Dendritic cell treated with granulocyte-macrophage colony-stimulating factor and Interleukin-4, amounts not matched to agents 40 ng/mL and 50 ng/mL, for 4 days (primary cell): ENCODE measurements at regions of chr12 and their contacts with region 1.

Region 1: DNA sequence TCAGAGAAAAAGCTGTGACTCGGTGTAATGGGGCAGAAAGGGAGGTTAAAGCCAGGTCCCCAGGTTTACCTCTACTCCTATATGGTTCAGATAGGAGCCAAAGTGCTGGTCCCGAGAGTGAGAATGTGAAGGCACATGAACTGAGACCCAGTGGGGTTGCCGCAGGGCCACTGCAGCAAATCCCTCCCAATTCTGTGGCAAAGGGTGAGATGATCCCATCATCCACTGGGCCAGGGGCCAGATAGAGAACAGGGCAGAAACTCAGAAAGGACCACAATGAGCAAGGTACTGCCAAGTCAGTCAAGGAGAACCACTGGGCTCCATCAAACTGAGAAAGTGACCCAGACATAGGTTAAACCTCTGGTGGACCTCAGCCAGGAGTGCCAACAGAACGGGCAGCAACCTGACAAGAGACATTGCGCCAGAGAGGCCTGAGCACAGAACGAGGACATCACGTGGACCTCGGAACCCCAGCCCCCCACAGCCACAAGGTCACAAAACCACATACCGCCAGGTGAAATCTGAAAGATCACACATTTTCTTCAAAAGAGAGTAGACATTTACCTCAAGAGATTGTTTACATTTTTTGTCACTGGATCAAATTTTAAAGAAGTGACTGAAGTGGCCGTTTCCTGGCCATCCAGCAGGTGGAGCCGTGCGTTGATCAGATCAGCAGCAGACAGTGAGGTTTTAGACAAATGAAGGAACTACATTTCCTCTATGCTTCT is 20.5 kb upstream of the ITPR2 start:
- H3K4me3 Mint-ChIP-seq: no peak overlapping the region
- H3K27ac Mint-ChIP-seq: peak overlapping the region; percentile 41
- H3K4me1 Mint-ChIP-seq: no peaks in the 10 kb centered on the region
- H3K27me3 Mint-ChIP-seq: no peaks in the 10 kb centered on the region

Region 2: GRCh38 chr12:26810330-26810729 is 43.1 kb before region 1 on chr12:
- intact Hi-C with region 1: no loop called
- H3K4me3 Mint-ChIP-seq: no peak overlapping the region
- H3K27ac Mint-ChIP-seq: peak overlapping the region; percentile 50
- H3K4me1 Mint-ChIP-seq: peaks cover 36% of the 10 kb centered on the region
- H3K27me3 Mint-ChIP-seq: no peaks in the 10 kb centered on the region

Region 3: DNA sequence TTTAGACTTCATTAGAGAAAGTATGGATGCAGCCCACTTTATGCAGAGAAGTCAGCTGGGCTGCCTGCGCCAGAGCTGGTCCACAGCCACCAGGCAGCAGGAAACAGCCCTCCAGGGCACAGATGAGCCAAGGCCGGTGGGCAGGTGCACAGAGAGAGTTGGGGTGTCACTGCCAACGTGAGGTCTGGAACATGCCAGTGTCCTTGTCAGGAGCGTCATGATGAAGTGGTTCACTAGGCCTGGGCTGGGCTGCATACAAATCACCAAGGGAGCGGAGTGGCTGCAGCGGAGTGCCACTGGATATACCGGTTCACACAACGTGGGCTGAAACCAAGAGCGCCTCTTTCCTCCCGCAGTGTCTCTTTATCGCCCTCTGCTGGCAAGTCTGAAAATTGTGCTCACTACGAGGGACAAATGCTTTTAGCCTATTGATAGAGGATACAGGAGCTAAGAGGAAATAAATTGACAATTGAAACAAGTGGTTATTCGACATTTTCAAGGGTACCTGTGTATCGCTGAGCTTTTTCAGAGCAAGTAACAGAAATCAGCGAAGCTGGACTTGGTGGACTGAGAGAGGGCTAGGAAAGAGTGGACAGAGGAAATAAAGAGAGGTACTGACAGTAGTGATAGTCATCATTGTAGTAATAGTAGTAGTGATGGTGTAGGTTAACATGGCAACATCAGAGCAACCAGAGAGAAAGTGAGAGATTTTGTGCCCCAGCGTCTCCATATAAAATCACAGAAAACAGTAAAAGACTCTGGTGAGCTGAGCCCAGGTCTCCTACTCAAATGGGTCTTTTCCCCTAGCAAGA is 31.5 kb after region 1 on chr12:
- intact Hi-C with region 1: loop called (anchors 1 kb)
- H3K4me3 Mint-ChIP-seq: peak overlapping the region; percentile 58
- H3K27ac Mint-ChIP-seq: no peak overlapping the region
- H3K4me1 Mint-ChIP-seq: peaks cover 10% of the 10 kb centered on the region
- H3K27me3 Mint-ChIP-seq: peaks cover 15% of the 10 kb centered on the region